Mammary epithelial cell (primary cell): ENCODE measurements at regions of chr1 and their contacts with region 1.

Region 1: GRCh38 chr1:23559136-23559984 is at the start of gene ID3:
- DNase-seq: peak; percentile 96
- H3K4me3 ChIP-seq: peak within 1 kb of the TSS; percentile 61 to 76 (median 75)
- H3K27ac ChIP-seq: peak within 1 kb of the TSS; percentile 76
- H3K4me1 ChIP-seq: peaks cover 48% of the 10 kb centered on the region
- H3K27me3 ChIP-seq: no peaks in the 10 kb centered on the region
- CTCF ChIP-seq: no peak
- total RNA-seq, gene ID3: 53.6 to 53.8 TPM

Region 2: GRCh38 chr1:23585447-23586015 is 26.2 kb after region 1 on chr1:
- CTCF ChIA-PET with region 1: interaction called, 10 read pairs
- dilution Hi-C with region 1: loop called (anchors 5 kb)
- in situ Hi-C with region 1: no loop called
- intact Hi-C with region 1: loop called (anchors 1 kb)
- DNase-seq: peak; percentile 96
- H3K4me3 ChIP-seq: no peak overlapping the region
- H3K27ac ChIP-seq: peak overlapping the region; percentile 71
- H3K4me1 ChIP-seq: peaks cover 36% of the 10 kb centered on the region
- H3K27me3 ChIP-seq: no peaks in the 10 kb centered on the region
- CTCF ChIP-seq: no peak

Region 3: GRCh38 chr1:23591460-23592208 is 32.3 kb after region 1 on chr1:
- CTCF ChIA-PET with region 1: interaction called, 11 read pairs
- dilution Hi-C with region 1: loop called (anchors 5 kb)
- in situ Hi-C with region 1: no loop called
- intact Hi-C with region 1: loop called (anchors 1 kb)
- DNase-seq: no peak
- H3K4me3 ChIP-seq: no peak overlapping the region
- H3K27ac ChIP-seq: peak overlapping the region; percentile 81
- H3K4me1 ChIP-seq: peaks cover 58% of the 10 kb centered on the region
- H3K27me3 ChIP-seq: no peaks in the 10 kb centered on the region
- CTCF ChIP-seq: no peak

Region 4: DNA sequence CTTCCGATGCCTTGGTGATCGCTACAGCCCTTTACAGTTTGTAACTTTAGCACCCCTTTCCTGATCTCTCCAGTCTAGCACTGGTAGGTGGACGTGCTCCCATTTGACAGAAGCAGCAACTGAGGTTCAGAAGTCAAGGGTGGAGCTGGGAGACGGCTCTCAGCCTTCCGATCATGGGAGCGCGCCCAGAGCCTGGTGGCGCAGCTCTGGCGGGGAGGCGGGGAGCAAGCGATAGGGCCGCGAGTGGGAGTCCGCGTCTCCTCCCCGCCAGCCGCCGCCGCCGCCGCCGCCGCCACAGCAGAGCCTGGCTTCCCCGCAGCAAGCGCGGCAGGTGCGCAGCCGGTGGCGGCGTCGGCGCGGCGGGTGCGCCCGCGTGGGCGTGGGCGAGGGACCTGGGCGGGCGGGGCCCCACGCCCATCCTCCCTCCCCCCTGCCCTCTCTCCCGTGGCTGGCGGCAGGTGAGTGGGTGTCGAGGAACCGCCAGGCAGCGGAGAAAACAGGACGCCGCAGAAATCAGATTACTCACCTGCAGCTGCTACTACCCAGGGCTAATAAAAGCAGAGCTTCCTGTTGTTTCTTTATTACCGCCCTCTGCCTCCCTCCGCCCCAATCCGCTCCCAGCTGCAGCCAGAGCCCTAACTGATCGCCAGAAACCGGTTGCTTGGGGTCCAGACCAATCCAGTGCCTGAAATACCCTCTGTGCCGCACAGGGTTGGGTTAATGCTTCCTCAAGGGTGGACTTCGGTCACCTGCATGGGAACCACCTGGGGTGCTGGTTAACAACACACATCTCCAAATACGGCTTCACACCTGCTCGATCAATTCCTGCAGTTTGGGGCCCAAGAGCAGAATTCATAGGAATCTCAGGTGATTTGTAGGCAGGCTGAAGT is 60.2 kb after region 1 on chr1:
- CTCF ChIA-PET with region 1: interaction called, 17 read pairs
- dilution Hi-C with region 1: loop called (anchors 5 kb)
- in situ Hi-C with region 1: no loop called
- intact Hi-C with region 1: no loop called
- DNase-seq: peak; percentile 74
- H3K4me3 ChIP-seq: peak overlapping the region in 2 of 3 experiments; percentile 16 to 25
- H3K27ac ChIP-seq: no peak overlapping the region
- H3K4me1 ChIP-seq: peaks cover 8% of the 10 kb centered on the region
- H3K27me3 ChIP-seq: no peaks in the 10 kb centered on the region
- CTCF ChIP-seq: no peak